ENCODE measurements at regions of chr3 and their contacts with region 1.

Region 1: DNA sequence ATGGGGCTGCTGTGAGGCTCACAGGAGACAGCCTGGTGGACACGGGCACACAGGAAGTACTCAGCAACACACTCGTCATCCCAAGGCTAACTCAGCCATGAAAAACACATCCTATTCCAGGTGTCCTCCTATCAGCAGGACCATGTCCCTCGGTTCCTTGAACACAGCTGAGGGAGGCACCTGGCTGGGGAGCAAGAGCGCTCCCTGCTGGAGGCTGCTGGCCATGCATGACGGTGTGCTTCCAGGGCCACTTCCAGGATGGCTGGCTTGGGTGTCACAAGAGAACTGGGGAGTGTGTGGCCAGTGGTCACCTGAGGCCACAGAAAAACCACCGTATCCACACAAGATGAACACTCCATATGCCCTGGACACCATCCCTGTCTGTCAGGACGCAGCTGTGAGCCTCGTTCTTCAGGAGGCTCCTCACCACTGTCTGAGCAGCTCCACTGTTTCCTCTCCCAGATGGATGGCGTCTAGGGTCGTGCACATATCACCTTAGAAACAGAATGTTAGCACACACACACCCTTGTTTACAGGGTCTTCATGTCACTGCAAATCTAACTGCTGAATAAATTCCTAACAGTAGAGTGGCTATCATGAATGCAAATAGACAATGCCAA is 31.0 kb downstream of the POC1A start:
- DNase-seq: no peak
- H3K4me3 ChIP-seq: no peak overlapping the region
- H3K27me3 ChIP-seq: no peaks in the 10 kb centered on the region
- CTCF ChIP-seq: peak; percentile 99

Region 2: GRCh38 chr3:51759203-51759602 is 364.0 kb before region 1 on chr3:
- CTCF ChIA-PET with region 1: no interaction called
- POLR2A ChIA-PET with region 1: no interaction called
- DNase-seq: no peak
- H3K4me3 ChIP-seq: no peak overlapping the region
- H3K27me3 ChIP-seq: no peaks in the 10 kb centered on the region
- CTCF ChIP-seq: no peak

Region 3: DNA sequence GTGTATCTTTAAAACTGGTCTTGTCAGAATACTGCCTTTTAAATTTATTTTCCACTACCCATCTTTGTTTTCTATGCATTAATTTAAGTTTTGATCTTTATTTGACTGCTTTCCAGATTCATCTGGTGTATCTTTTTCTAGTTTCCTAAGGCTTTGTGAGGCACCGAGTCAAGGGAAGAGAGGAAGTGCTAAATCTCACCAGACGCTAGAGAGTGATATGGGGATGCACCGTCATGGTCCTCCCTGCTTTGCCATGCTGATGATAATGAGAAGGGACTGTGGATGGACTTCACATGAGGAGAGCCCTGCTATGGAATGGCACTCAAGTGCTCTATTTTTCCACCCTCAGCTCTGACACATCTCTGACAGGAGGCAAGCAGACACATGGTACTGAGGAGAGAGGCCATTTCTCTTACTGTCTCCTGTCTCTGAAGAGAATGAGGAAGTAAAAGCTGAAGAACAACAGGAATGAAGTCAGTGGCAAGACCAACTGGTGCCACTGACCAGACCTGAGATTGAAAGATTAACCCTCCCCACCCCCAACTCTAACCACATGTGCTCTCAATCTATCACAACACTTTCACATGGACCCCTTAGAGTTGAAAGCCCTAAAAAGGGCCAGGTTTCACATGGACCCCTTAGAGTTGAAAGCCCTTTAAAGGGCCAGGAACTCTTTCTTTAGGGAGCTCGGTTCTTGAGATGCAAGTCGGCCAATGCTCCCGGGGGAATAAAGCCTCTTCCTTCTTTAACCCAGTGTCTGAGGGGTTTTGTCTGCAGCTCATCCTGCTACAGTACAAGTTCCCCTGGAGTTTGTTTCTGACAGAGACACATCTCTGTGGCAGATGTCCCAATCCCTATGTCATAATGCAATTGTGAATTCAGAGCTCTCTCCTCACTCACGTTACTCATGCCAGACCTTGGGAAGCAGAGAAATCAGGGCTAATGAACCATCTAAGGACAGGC is 262.2 kb before region 1 on chr3 and contains the start of gene IQCF2:
- CTCF ChIA-PET with region 1: no interaction called
- POLR2A ChIA-PET with region 1: no interaction called
- DNase-seq: no peak
- H3K4me3 ChIP-seq: no peak within 1 kb of the TSS
- H3K27me3 ChIP-seq: no peaks in the 10 kb centered on the region
- CTCF ChIP-seq: no peak
- polyA plus RNA-seq, gene IQCF2: not detected in 2 replicates

Region 4: DNA sequence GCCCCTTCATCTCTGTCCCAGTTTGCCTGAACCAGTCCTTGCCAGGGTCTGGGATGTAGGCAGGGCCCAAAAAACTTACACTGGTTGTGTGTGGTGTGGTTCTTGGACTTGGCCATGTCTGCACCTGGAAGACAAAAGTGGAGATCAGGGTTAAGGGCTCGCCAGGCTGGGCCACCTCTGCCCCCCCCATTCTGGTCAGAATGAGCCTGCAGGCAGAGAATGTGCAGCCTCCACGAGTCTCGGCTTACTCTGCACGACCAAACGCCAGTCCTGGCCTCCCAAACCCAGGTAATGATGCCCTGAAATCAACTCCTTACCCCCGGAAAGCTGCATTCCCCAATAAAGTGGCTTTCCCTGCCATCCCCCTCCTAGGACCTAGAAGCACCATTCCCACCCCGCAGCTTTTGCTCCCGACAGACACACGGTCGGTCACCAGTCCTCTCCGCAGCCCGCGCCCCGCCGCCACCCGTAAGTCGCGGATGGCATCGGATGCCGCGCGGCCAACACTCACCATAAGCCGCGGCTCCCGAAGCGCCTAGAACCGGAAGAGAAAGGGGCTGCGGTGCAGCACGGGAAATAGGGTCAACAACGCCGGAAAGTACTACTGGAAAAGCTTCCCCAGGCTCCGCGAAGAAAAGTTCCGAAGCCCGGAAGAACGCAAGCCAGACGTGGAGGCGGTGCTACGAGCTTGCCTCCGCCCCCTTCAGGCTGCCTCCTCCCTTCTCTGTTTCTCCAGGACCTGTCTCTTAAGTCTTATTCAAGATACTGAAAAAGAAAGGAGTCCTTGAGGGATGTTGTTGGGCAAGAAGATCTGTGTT is 127.7 kb before region 1 on chr3 and contains the start of gene RPL29:
- CTCF ChIA-PET with region 1: interaction called, 222 read pairs
- POLR2A ChIA-PET with region 1: no interaction called
- DNase-seq: peak; percentile 76
- H3K4me3 ChIP-seq: peak within 1 kb of the TSS; percentile 91
- H3K27me3 ChIP-seq: no peaks in the 10 kb centered on the region
- CTCF ChIP-seq: no peak
- polyA plus RNA-seq, gene RPL29: 1,978 and 2,324 TPM in 2 replicates

Region 5: GRCh38 chr3:52014613-52015012 is 108.6 kb before region 1 on chr3:
- CTCF ChIA-PET with region 1: interaction called, 26 read pairs
- POLR2A ChIA-PET with region 1: no interaction called
- DNase-seq: no peak
- H3K4me3 ChIP-seq: no peak overlapping the region
- H3K27me3 ChIP-seq: no peaks in the 10 kb centered on the region
- CTCF ChIP-seq: peak; percentile 56

Region 6: DNA sequence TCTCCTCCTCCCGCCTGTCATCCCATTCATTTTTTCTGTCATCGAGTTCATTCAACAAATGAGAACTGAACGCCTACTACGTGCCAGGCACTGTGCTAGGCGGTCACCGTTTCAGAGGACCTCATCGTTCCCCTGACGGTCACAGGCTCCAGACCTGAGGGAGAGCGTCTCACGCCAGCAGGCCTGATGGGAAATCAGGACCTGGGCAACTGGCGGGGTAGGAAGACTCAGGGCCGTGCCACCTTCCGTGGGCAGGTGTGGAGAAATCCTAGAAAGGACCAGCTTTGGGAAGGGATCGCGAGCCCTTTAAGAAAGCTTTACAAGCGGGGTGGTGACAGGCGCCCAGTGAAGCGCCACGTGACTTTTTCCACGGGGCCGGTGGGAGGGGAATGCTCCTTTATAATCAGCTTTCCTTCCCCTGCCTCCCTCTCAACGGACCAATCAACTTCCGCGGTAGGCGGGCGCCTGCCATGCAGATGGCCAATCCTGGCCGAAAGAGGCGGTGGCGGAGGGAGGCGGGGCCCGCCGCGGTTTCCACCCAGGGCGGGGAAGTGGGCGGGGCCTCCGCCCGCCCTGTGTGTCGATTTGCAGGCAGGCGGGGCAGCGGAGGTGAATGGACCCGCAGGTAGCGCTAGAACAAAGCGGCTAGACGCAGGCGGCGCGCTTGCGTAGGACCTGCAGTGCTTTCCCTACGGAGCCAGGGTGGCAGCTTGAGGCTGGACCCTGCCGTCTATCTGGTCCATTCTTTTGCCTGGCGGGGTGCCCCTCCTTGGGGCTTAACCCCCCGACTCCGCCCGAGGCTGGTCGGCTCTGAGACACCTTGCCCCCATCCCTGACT is 66.0 kb before region 1 on chr3:
- CTCF ChIA-PET with region 1: interaction called, 120 read pairs
- POLR2A ChIA-PET with region 1: no interaction called
- DNase-seq: peak; percentile 91
- H3K4me3 ChIP-seq: peak overlapping the region; percentile 94
- H3K27me3 ChIP-seq: no peaks in the 10 kb centered on the region
- CTCF ChIP-seq: no peak

Region 7: GRCh38 chr3:52108302-52109232 is 14.6 kb before region 1 on chr3:
- CTCF ChIA-PET with region 1: interaction called, 61 read pairs
- POLR2A ChIA-PET with region 1: no interaction called
- DNase-seq: no peak
- H3K4me3 ChIP-seq: no peak overlapping the region
- H3K27me3 ChIP-seq: no peaks in the 10 kb centered on the region
- CTCF ChIP-seq: peak; percentile 52

Region 8: DNA sequence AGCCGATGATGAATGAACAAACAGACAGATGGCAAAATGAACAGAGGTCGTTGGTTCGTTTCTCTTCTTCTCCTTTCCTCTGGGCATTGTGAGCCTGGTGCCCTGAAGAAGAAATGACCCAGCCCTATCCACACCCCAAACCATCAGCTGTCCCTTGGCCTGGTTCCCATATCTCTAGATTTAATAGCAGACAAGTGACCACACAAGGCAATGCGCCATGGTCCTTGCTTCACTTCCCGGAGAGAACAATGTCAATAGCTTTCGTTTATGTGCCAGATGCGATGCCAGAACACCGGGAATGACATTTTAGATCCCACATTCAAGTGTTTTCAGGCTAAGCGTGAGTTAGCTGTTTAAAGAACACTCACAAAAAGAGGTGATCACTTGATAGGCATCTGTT is 13.3 kb after region 1 on chr3:
- CTCF ChIA-PET with region 1: interaction called, 39 read pairs
- POLR2A ChIA-PET with region 1: no interaction called
- DNase-seq: no peak
- H3K4me3 ChIP-seq: no peak overlapping the region
- H3K27me3 ChIP-seq: no peaks in the 10 kb centered on the region
- CTCF ChIP-seq: no peak

Region 9: GRCh38 chr3:52144034-52144795 is 21.0 kb after region 1 on chr3:
- CTCF ChIA-PET with region 1: interaction called, 11 read pairs
- POLR2A ChIA-PET with region 1: no interaction called
- DNase-seq: no peak
- H3K4me3 ChIP-seq: no peak overlapping the region
- H3K27me3 ChIP-seq: no peaks in the 10 kb centered on the region
- CTCF ChIP-seq: peak; percentile 95

Measured in BJ (cell line).